Endothelial cell of umbilical vein (primary cell): ENCODE measurements at regions of chr1 and their contacts with region 1.

Region 1: DNA sequence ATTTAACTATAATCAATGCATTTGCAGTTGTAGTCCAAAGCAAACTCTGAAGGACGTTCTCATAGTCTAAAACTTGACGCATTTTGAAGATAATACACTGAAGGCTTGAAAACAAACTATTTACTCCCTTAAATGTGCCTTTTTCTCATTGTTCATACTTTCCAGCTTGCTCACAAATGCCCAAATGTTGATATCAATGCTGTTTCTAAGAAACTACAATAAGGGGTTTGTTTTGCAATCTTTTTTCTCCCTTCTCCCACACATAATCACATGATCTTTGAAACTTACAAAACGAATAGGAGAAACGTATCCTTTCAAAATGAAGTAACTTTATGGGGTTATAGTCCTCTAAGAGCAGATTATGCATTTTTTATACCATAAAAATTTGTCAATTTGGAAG is 508.7 kb downstream of the DPYD start:
- DNase-seq: no peak
- H3K4me3 ChIP-seq: no peak overlapping the region
- H3K27ac ChIP-seq: no peak overlapping the region
- H3K4me1 ChIP-seq: no peaks in the 10 kb centered on the region
- H3K27me3 ChIP-seq: no peaks in the 10 kb centered on the region
- CTCF ChIP-seq: no peak
- POLR2A ChIP-seq: no peak

Region 2: GRCh38 chr1:95984798-95985374 is 1427.3 kb before region 1 on chr1:
- CTCF ChIA-PET with region 1: no interaction called
- POLR2A ChIA-PET with region 1: no interaction called
- dilution Hi-C with region 1: no loop called
- intact Hi-C with region 1: loop called (anchors 10 kb)
- DNase-seq: no peak
- H3K4me3 ChIP-seq: no peak overlapping the region
- H3K27ac ChIP-seq: no peak overlapping the region
- H3K4me1 ChIP-seq: no peaks in the 10 kb centered on the region
- H3K27me3 ChIP-seq: peaks cover 0 to 3% of the 10 kb centered on the region in 2 experiments
- CTCF ChIP-seq: no peak
- POLR2A ChIP-seq: no peak